Colonic mucosa (tissue), 4 donors: ENCODE measurements at regions of chr9 and their contacts with region 1.

Region 1: DNA sequence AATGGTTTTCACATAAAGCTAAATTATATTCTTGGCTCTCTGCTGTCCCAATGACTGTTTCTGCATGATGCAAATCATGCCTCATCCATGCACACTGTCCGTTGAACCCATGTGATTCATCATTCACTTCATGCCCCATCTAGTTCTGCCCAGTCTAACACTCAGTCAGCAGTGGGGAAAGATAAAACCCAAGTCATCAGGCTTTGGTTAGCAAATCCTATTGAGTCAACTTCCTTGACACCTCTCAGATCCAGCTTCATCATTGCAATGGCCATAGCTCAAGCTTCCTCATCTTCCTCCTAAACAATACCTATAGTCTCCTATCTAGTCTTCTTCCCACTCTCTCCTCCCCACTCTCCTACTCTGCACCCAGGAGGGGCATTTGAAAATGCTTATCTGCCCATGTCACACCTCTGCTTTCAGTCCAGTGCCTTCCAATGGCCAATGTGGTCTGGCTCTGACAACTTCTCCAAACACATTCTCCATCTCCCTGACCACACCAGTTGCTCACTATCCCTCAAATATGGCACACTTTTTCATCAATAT is 266.0 kb upstream of the TRIM32 start:
- DNase-seq: no peak
- H3K4me3 ChIP-seq: no peak overlapping the region
- H3K27ac ChIP-seq: no peak overlapping the region
- H3K4me1 ChIP-seq: no peaks in the 10 kb centered on the region
- H3K27me3 ChIP-seq: no peaks in the 10 kb centered on the region
- CTCF ChIP-seq: no peak

Region 2: GRCh38 chr9:116087246-116087645 is 333.8 kb before region 1 on chr9:
- intact Hi-C with region 1: loop called (anchors 5 kb)
- DNase-seq: no peak
- H3K4me3 ChIP-seq: no peak overlapping the region
- H3K27ac ChIP-seq: no peak overlapping the region
- H3K4me1 ChIP-seq: no peaks in the 10 kb centered on the region
- H3K27me3 ChIP-seq: no peaks in the 10 kb centered on the region
- CTCF ChIP-seq: no peak

Region 3: DNA sequence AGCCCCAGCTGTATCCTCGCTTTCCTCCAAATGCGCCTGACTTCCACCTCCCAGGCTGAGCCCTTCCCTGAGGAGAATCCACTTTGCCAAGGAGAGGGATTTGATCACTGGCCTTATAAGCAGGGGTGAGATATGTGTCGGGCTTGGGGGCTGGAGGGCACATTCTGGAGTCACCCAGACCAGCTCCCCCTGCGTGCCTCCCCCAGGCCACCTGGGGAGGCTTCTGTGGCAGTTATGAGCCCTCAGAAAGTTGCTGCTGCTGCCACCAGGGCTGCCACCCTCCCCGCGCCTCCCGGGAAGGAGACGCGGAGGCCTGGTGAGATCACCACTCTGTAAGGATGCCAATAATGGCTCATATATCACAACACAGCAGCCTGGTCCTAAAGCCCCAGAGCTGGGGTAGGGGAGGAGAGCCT is 56.0 kb before region 1 on chr9:
- intact Hi-C with region 1: loop called (anchors 10 kb)
- DNase-seq: peak; percentile 22
- H3K4me3 ChIP-seq: no peak overlapping the region
- H3K27ac ChIP-seq: no peak overlapping the region
- H3K4me1 ChIP-seq: no peaks in the 10 kb centered on the region
- H3K27me3 ChIP-seq: no peaks in the 10 kb centered on the region
- CTCF ChIP-seq: no peak

Region 4: DNA sequence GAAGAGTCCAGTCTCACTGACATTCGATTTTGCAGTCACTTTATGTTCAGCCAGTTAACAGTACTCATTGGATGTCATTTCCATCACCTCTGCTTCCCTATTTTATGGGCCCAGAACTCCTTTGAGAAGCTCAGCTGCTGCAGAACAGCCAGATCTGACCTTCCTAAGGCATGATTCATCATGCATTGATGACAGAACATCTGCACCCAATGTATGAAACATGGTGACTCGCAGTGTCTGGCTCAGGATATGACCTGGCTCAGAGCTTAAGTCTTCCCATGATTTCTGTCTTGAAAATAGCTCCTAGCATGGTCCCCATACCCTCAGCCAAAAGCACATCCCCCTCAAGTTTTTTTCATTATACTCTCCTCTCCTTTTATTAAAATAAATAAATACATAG is 173.5 kb after region 1 on chr9:
- intact Hi-C with region 1: no loop called
- DNase-seq: no peak
- H3K4me3 ChIP-seq: no peak overlapping the region
- H3K27ac ChIP-seq: no peak overlapping the region
- H3K4me1 ChIP-seq: no peaks in the 10 kb centered on the region
- H3K27me3 ChIP-seq: no peaks in the 10 kb centered on the region
- CTCF ChIP-seq: no peak